Upper lobe of right lung (tissue), 1 donor: ENCODE measurements at regions of chr7 and their contacts with region 1.

Region 1: DNA sequence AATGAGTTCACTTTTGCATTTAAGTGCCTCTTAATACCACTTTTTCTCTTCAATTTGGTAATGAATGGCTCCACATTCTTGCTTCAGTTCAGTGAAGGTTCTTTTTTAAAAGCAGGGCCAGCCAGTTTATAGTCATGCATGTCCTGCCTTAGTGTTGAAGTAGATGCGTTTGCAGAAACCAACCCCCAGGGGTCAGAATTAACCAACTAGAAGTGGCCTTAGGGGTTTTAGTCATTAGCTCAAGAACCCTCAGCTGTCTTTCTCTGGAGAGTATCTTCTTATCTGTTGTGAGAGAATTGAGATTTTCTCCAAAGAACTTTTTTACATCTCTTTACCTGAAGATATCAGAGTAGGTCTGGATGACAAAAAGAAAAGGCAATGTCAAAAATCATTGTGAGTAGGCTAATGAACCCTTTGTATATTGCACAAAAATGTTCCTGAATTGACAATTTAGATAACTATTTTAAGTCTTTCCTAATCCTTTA is 82.2 kb downstream of the PIK3CG start:
- DNase-seq: no peak
- ATAC-seq: peak; percentile 86
- H3K4me3 ChIP-seq: no peak overlapping the region
- H3K27ac ChIP-seq: no peak overlapping the region
- H3K4me1 ChIP-seq: no peaks in the 10 kb centered on the region
- H3K27me3 ChIP-seq: no peaks in the 10 kb centered on the region
- CTCF ChIP-seq: peak; percentile 56

Region 2: GRCh38 chr7:106999023-106999422 is 51.7 kb after region 1 on chr7:
- intact Hi-C with region 1: no loop called
- DNase-seq: no peak
- ATAC-seq: no peak
- H3K4me3 ChIP-seq: no peak overlapping the region
- H3K27ac ChIP-seq: no peak overlapping the region
- H3K4me1 ChIP-seq: no peaks in the 10 kb centered on the region
- H3K27me3 ChIP-seq: no peaks in the 10 kb centered on the region
- CTCF ChIP-seq: no peak

Region 3: DNA sequence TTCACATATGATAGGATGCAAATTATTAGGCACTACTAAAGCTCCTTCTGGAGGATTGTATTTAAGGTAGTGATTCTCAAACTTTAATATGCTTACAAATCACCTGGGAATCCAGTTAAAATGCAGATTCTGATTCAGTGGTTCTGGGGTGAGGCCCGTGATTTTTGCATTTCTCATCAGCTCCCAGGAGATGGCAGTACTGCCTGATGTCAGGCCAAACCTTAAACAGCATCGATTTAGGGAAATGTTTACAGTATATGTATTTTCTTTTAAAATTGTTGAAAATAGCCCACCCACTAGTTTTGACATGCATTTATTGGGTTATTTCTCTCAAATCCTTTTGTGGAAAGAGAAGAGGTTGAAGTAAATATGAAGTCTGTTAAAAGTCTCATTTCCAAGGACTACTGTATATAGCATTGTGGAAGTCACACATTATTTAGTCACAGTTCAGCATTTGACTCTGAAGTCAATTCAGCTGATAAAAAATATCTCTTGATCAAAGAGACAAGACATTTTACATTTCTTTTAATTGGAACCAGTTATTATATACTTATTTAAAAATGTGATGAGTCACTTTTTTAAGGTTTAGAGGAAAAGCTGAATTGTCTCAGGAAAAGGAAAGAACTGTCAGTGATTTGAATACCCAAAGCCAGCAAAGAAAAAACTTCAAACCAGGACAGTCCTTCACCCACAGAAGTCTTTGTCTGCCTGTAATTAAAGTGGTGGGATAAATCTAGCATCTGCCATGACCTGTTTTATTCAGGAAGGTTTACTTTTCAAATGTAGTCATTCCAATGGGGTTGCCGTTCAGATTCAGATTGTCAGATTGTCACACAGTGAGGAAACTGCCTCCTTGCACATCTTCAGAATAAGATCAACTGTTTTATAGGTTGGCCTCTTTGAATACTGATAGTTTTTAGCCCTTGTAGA is 200.4 kb after region 1 on chr7:
- intact Hi-C with region 1: loop called (anchors 5 kb)
- DNase-seq: no peak
- ATAC-seq: peak; percentile 80
- H3K4me3 ChIP-seq: no peak overlapping the region
- H3K27ac ChIP-seq: no peak overlapping the region
- H3K4me1 ChIP-seq: peaks cover 4% of the 10 kb centered on the region
- H3K27me3 ChIP-seq: no peaks in the 10 kb centered on the region
- CTCF ChIP-seq: peak; percentile 70